Right cardiac atrium (tissue), 5 donors: ENCODE measurements at regions of chr17 and their contacts with region 1.

Region 1: GRCh38 chr17:5584383-5585286 is at the start of gene NLRP1:
- DNase-seq: peak; percentile 93 to 97 (median 96)
- ATAC-seq: peak; percentile 96
- H3K4me3 ChIP-seq: peak within 1 kb of the TSS; percentile 58
- H3K27ac ChIP-seq: peak within 1 kb of the TSS; percentile 79
- H3K4me1 ChIP-seq: peaks cover 3% of the 10 kb centered on the region
- H3K27me3 ChIP-seq: no peaks in the 10 kb centered on the region
- total RNA-seq, gene NLRP1: 10.3 to 17.5 (median 11.6) TPM

Region 2: GRCh38 chr17:5706577-5707216 is 122.1 kb after region 1 on chr17:
- intact Hi-C with region 1: loop called in 1 of 4 experiments (anchors 10 kb)
- DNase-seq: peak; percentile 42 to 77 (median 72)
- ATAC-seq: peak in 1 of 2 donors; percentile 52
- H3K4me3 ChIP-seq: no peak overlapping the region
- H3K27ac ChIP-seq: no peak overlapping the region
- H3K4me1 ChIP-seq: no peaks in the 10 kb centered on the region
- H3K27me3 ChIP-seq: no peaks in the 10 kb centered on the region

Region 3: GRCh38 chr17:6045621-6046357 is 461.2 kb after region 1 on chr17:
- intact Hi-C with region 1: loop called in 2 of 4 experiments (anchors 10 kb)
- DNase-seq: no peak
- ATAC-seq: no peak
- H3K4me3 ChIP-seq: no peak overlapping the region
- H3K27ac ChIP-seq: no peak overlapping the region
- H3K4me1 ChIP-seq: no peaks in the 10 kb centered on the region
- H3K27me3 ChIP-seq: no peaks in the 10 kb centered on the region

Region 4: GRCh38 chr17:6421700-6422604 is 837.3 kb after region 1 on chr17:
- intact Hi-C with region 1: loop called in 3 of 4 experiments (anchors 2 to 5 kb)
- DNase-seq: peak; percentile 80 to 87 (median 86)
- ATAC-seq: peak; percentile 77 to 84
- H3K4me3 ChIP-seq: no peak overlapping the region
- H3K27ac ChIP-seq: no peak overlapping the region
- H3K4me1 ChIP-seq: no peaks in the 10 kb centered on the region
- H3K27me3 ChIP-seq: no peaks in the 10 kb centered on the region

Region 5: GRCh38 chr17:6435968-6436367 is 851.3 kb after region 1 on chr17:
- intact Hi-C with region 1: loop called in 1 of 4 experiments (anchors 5 kb)
- DNase-seq: peak; percentile 61 to 81 (median 70)
- ATAC-seq: peak; percentile 81 to 92
- H3K4me3 ChIP-seq: no peak overlapping the region
- H3K27ac ChIP-seq: no peak overlapping the region
- H3K4me1 ChIP-seq: no peaks in the 10 kb centered on the region
- H3K27me3 ChIP-seq: no peaks in the 10 kb centered on the region